Activated CD8-positive, alpha-beta memory T cell treated with anti-CD3 and anti-CD28 coated beads, Interleukin-2, amount 10 ng/mL, durations not matched to agents 7 days and 5 days (primary cell): ENCODE measurements at regions of chr2 and their contacts with region 1.

Region 1: DNA sequence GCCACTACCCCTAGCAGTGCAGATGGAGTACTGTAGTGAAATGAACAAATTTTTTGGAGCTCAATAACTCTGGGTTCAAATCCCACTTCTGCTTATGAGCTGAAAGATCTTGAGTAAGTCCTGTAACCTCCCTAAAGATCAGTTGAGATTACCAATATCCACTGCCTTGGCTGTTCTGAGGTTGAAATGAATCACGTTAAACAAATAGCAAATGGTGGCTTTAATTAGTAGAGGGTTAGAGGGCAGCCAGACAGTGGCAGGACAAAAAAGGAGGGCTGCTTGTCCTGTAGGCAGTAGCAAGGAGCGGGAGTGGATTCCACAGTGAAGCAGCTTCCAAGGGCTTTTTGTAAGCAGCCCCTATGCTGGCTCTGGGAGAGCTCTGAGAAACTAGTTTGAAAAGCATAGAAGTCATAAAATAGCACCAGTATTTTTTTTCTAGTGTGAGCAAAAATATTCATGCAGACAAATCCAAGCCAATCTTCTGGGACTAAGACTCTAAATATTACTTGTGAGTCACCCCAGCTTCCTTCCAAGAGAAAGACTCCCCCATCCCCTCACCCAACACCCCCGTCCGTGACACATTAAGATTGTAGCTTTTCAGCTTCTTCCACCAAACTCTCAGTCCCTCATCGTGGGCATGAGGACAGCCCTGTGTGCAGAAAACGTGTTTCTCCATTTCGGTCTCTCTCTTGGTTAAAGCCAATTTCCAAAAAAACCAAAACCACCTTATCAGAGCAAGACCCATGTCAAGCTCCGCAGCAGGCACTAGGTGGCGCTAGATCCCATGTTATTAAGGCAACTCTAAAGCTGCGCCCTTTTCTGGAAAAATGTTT is 123.5 kb upstream of the LGALSL start:
- DNase-seq: peak; percentile 84
- ATAC-seq: peak; percentile 20
- H3K4me3 Mint-ChIP-seq: peak overlapping the region; percentile 25
- H3K27ac Mint-ChIP-seq: peak overlapping the region; percentile 37
- H3K4me1 Mint-ChIP-seq: peaks cover 47% of the 10 kb centered on the region
- H3K27me3 Mint-ChIP-seq: peaks cover 9% of the 10 kb centered on the region

Region 2: GRCh38 chr2:64052468-64053241 is 277.8 kb before region 1 on chr2:
- CTCF ChIA-PET with region 1: interaction called, 175 read pairs
- DNase-seq: no peak
- ATAC-seq: no peak
- H3K4me3 Mint-ChIP-seq: no peak overlapping the region
- H3K27ac Mint-ChIP-seq: no peak overlapping the region
- H3K4me1 Mint-ChIP-seq: peaks cover 43% of the 10 kb centered on the region
- H3K27me3 Mint-ChIP-seq: peaks cover 3% of the 10 kb centered on the region

Region 3: GRCh38 chr2:64318476-64318748 is 12.1 kb before region 1 on chr2:
- CTCF ChIA-PET with region 1: interaction called, 13 read pairs
- DNase-seq: no peak
- ATAC-seq: no peak
- H3K4me3 Mint-ChIP-seq: no peak overlapping the region
- H3K27ac Mint-ChIP-seq: no peak overlapping the region
- H3K4me1 Mint-ChIP-seq: peaks cover 5% of the 10 kb centered on the region
- H3K27me3 Mint-ChIP-seq: peaks cover 15% of the 10 kb centered on the region

Region 4: DNA sequence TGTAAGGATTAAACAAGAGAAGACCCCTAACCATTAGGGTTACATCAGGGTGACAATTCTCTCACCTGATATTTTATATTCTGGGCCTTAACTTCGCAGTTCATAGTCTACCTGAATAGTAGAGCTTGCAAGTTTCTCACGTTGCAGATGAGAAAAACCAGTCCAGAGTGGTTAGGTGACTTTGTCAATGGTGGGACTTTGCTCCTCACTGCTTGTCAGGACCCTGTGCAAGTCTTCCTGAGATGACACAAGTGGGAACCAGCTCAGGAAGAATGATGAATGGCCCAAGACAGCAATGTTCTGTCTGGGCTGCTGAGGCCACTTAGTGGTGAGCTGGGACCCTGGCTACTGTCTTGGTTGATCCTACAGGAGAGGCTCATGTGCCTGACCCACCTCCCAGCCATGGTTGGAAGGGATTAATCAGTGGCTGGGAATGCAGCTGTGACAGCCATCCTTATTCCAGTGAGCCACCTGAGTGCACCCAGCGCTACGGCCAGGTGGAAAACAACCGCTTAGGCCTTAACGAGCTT is 140.3 kb after region 1 on chr2:
- CTCF ChIA-PET with region 1: interaction called, 10 read pairs
- DNase-seq: no peak
- ATAC-seq: no peak
- H3K4me3 Mint-ChIP-seq: no peak overlapping the region
- H3K27ac Mint-ChIP-seq: no peak overlapping the region
- H3K4me1 Mint-ChIP-seq: peaks cover 3% of the 10 kb centered on the region
- H3K27me3 Mint-ChIP-seq: peaks cover 13% of the 10 kb centered on the region

Region 5: GRCh38 chr2:64562148-64562784 is 231.8 kb after region 1 on chr2:
- CTCF ChIA-PET with region 1: interaction called, 22 read pairs
- DNase-seq: no peak
- ATAC-seq: peak; percentile 69
- H3K4me3 Mint-ChIP-seq: no peak overlapping the region
- H3K27ac Mint-ChIP-seq: peak overlapping the region; percentile 42
- H3K4me1 Mint-ChIP-seq: peaks cover 36% of the 10 kb centered on the region
- H3K27me3 Mint-ChIP-seq: no peaks in the 10 kb centered on the region

Region 6: GRCh38 chr2:64644177-64645004 is 313.9 kb after region 1 on chr2:
- CTCF ChIA-PET with region 1: interaction called, 14 read pairs
- DNase-seq: peak; percentile 83
- ATAC-seq: peak; percentile 84
- H3K4me3 Mint-ChIP-seq: peak overlapping the region; percentile 85
- H3K27ac Mint-ChIP-seq: peak overlapping the region; percentile 93
- H3K4me1 Mint-ChIP-seq: peaks cover 77% of the 10 kb centered on the region
- H3K27me3 Mint-ChIP-seq: no peaks in the 10 kb centered on the region